GM13977 (cell line): ENCODE measurements at regions of chr18 and their contacts with region 1.

Region 1: DNA sequence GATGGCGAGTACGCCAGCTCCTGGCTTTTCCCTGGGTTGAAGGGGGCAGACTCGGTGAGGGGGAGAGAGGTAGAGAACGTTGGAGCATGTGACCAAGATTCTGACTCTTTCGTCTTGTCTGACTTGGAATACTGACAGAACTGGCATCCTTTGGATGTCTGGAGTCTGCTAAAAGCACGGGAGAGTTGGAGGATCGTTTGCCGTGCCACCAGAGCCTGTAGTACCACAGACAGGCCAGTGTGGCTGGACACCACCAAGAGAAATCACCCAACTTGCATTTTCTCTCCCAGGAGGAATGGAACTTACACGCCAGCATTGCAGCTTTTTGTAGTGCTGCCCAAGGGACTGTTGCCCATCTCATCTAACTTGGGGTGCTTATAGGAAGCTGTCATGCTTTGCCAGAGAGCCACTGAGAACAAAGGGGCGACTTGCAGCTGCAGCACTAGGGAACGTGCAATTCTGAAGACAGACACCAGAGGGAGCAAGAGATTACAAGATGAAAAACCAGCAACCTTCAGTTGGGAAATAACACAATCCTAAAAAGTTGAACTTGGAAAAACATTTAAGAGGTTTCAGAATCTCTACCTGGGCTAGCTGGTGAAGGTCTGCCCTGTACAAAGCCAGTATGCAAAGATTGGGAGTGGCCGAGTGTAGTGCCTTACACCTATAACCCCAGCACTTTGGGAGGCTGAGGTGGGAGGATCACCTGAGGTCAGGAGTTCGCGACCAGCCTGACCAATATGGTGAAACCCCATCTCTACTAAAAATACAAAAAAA is 24.1 kb downstream of the PSMG2 start:
- DNase-seq: peak; percentile 67
- CTCF ChIP-seq: peak; percentile 81

Region 2: DNA sequence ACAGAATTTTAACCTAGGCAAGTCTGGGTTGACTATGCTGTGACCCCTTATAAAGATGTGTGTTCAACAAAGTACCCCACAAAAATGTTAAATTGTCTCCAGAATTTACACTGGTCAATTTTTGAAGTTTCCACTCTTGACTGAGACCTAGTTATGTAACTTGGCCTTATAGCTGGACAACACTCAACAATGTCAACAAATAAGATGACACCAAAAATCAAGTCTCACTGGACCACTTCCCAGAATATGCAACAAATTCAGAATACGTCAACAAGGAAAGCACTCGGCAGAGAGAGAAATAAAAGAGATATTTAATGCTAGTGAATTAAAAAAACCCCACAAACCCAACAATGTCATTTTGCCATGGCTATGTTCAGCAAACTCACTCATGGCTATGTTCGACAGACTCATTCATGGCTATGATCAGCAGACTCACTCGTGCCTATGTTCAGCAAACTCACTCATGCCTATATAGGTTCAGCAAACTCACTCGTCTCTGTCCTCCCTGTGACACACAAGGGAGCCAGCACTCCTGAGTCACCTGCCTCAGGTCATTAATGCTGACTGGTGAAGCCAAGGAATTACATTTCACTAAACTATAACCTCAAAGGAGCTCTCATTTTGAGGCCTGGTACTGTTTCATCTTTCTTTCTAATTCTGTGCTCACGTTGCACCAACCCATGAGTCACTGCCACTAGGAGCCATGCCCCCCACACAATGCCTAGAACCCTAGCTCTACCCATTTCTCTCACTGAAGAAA is 84.4 kb after region 1 on chr18:
- in situ Hi-C with region 1: no loop called
- DNase-seq: no peak
- CTCF ChIP-seq: no peak

Region 3: DNA sequence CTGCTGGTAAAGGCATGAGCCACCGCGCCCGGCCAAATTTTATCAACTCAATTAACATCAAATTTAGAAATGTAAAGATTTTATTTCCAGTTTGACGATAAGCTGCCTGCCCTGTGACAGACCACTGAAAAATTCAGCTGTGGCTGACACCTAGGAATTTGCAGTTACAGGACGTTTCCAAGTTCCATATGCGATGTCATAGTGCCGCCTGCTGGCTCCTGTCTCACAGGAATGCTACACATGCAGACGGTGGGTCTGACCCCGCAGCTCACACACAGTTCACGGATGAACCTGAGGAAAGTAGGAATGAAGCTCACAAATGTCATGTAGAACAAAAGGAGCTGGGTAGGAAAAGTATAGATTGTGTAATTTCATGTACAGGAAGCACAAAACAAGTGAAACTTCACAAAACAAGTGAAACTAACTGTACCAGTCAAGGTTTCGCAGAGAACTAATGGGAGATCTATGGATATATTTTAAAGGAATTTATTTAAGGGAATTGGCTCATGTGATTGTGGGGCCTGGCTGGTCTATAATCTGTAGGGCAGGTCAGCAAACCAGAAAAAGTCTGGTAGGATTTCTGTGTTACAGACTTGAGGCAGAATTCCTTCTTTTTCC is 207.6 kb after region 1 on chr18:
- in situ Hi-C with region 1: loop called (anchors 10 kb)
- DNase-seq: peak; percentile 73
- CTCF ChIP-seq: peak; percentile 96

Region 4: DNA sequence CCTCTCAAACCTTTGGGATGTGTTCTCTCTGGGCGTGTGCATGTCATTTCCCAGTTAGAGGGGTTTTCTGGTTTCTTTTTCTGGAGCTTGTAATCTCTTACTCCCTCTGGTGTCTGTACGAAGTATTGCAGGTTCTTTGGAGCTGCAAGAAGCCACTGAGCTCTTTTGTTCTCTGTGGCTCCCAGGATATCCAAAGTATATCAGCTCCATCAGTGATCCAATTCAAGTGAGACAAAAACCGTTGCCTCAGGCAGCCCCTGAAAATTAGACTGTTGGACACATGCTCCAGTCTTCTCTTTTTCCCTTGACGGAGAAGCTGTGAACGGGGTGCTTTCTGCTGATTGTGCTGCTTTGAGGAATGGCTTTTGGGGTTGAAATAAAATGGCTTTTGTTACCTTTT is 432.6 kb after region 1 on chr18:
- in situ Hi-C with region 1: loop called (anchors 25 kb)
- DNase-seq: peak; percentile 76
- CTCF ChIP-seq: peak; percentile 75